ENCODE measurements at regions of chr9 and their contacts with region 1.

Region 1: GRCh38 chr9:26744191-26744965 is 148.2 kb downstream of the CAAP1 start:
- DNase-seq: no peak
- H3K4me3 ChIP-seq: no peak overlapping the region
- H3K27ac ChIP-seq: no peak overlapping the region
- H3K4me1 ChIP-seq: peaks cover 0 to 6% (median 0%) of the 10 kb centered on the region in 6 donors
- H3K27me3 ChIP-seq: no peaks in the 10 kb centered on the region
- CTCF ChIP-seq: peak; percentile 19 to 84 (median 73)
- POLR2A ChIP-seq: no peak

Region 2: GRCh38 chr9:26856413-26857032 is 112.1 kb after region 1 on chr9:
- intact Hi-C with region 1: loop called (anchors 10 kb)
- DNase-seq: no peak
- H3K4me3 ChIP-seq: no peak overlapping the region
- H3K27ac ChIP-seq: no peak overlapping the region
- H3K4me1 ChIP-seq: no peaks in the 10 kb centered on the region
- H3K27me3 ChIP-seq: no peaks in the 10 kb centered on the region
- CTCF ChIP-seq: peak in 4 of 11 experiments; percentile 10 to 28 (median 18)
- POLR2A ChIP-seq: no peak

Region 3: DNA sequence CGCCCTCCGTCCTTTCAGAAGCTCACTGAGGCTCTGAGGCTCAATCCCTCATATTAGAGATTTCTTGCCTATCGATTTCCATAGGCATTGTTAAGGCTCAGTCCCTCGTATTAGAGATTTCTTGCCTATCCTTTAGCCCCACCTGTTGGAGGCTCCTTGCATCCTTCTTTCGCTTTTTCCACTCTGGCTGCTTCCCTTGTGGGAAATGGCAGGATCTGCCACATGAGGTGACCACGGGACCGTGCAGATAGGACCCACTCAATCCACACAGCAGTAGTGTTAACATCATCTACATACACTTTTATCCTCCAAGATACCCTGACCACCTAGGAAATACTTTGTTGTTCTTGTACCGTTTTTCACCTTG is 231.3 kb after region 1 on chr9:
- intact Hi-C with region 1: loop called (anchors 5 kb)
- DNase-seq: no peak
- H3K4me3 ChIP-seq: no peak overlapping the region
- H3K27ac ChIP-seq: no peak overlapping the region
- H3K4me1 ChIP-seq: no peaks in the 10 kb centered on the region
- H3K27me3 ChIP-seq: no peaks in the 10 kb centered on the region
- CTCF ChIP-seq: peak in 8 of 11 experiments; percentile 21 to 51 (median 44)
- POLR2A ChIP-seq: no peak

Region 4: DNA sequence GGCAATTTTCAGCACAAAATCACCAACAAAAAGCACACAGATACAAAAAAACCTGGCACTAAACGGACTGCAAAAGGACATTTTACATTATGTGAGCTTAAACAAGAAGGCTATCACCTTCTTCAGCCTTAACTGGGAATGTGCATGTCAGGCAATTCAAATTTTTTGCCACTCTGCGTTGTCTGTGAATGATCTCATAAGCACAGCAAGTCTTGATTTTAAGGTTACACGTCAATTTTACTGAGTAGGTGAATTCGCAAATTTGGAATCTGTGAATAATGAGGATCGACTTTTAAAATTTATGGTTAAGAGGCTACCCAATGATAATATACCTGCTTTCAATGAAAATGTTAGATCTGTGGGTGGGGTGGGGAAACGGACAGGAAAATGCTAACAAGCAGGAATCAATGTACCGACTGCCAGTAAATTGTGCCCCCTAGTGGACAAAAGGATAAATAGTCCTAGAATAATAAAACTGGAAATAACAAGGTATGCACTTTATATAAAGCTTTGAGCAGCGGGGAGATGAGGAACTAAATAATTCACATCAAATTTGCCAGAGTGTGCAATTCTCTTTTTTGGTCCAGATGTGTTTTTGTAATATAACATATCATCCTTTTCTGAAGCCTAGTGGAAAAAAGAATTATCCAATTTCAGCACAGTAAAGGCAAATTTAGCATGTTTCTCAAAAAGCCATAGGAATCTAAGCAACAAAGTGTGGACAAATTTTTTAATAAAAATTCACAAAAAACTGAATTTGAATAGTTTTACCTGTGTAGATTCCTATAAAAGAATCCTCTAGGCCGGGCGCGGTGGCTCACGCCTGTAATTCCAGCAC is 532.0 kb after region 1 on chr9:
- intact Hi-C with region 1: loop called (anchors 10 kb)
- DNase-seq: no peak
- H3K4me3 ChIP-seq: peak overlapping the region in 1 of 8 donors; percentile 29
- H3K27ac ChIP-seq: no peak overlapping the region
- H3K4me1 ChIP-seq: peaks cover 0 to 15% (median 7%) of the 10 kb centered on the region in 6 donors
- H3K27me3 ChIP-seq: no peaks in the 10 kb centered on the region
- CTCF ChIP-seq: peak; percentile 14 to 73 (median 66)
- POLR2A ChIP-seq: no peak

Measured in spleen (tissue), 13 donors.